GM12878 (cell line): ENCODE measurements at regions of chr14 and their contacts with region 1.

Region 1: GRCh38 chr14:35883677-35884293 is 57.6 kb downstream of the BRMS1L start:
- DNase-seq: no peak
- ATAC-seq: peak; percentile 76
- H3K4me3 ChIP-seq: no peak overlapping the region
- H3K27ac ChIP-seq: no peak overlapping the region
- H3K4me1 ChIP-seq: 0 out of 2 replicates have a peak, but pooled peaks cover 4% of the 10 kb centered on the region
- H3K27me3 ChIP-seq: no peaks in the 10 kb centered on the region
- CTCF ChIP-seq: peak; percentile 65 to 80 (median 72)
- EP300 ChIP-seq: no peak
- POLR2A ChIP-seq: no peak
- RAD21 ChIP-seq: peak; percentile 55; the same call in 1 of the 2 replicates

Region 2: GRCh38 chr14:35797796-35798195 is 86.0 kb before region 1 on chr14:
- CTCF ChIA-PET with region 1: no interaction called
- POLR2A ChIA-PET with region 1: no interaction called
- RAD21 ChIA-PET with region 1: no interaction called
- SMC1A ChIA-PET with region 1: no interaction called
- in situ Hi-C with region 1: no loop called
- intact Hi-C with region 1: no loop called
- DNase-seq: no peak
- ATAC-seq: no peak
- H3K4me3 ChIP-seq: no peak overlapping the region
- H3K27ac ChIP-seq: no peak overlapping the region
- H3K4me1 ChIP-seq: no peaks in the 10 kb centered on the region
- H3K27me3 ChIP-seq: no peaks in the 10 kb centered on the region
- CTCF ChIP-seq: no peak
- EP300 ChIP-seq: no peak
- POLR2A ChIP-seq: no peak
- RAD21 ChIP-seq: no peak

Region 3: GRCh38 chr14:35855876-35856481 is 27.8 kb before region 1 on chr14:
- CTCF ChIA-PET with region 1: interaction called, 11 read pairs
- POLR2A ChIA-PET with region 1: no interaction called
- RAD21 ChIA-PET with region 1: no interaction called
- SMC1A ChIA-PET with region 1: interaction called, 4 read pairs
- in situ Hi-C with region 1: no loop called
- intact Hi-C with region 1: no loop called
- DNase-seq: peak; percentile 85
- ATAC-seq: peak; percentile 97
- H3K4me3 ChIP-seq: no peak overlapping the region
- H3K27ac ChIP-seq: peak overlapping the region; percentile 27; the same call in 1 of the 2 replicates
- H3K4me1 ChIP-seq: peaks cover 28% of the 10 kb centered on the region
- H3K27me3 ChIP-seq: no peaks in the 10 kb centered on the region
- CTCF ChIP-seq: peak in 1 of 3 experiments; percentile 29; a peak in 2 of 6 replicates
- EP300 ChIP-seq: peak; percentile 85 to 100; a peak in 3 of 4 replicates
- POLR2A ChIP-seq: no peak
- RAD21 ChIP-seq: peak; percentile 38; the same call in 1 of the 2 replicates

Region 4: DNA sequence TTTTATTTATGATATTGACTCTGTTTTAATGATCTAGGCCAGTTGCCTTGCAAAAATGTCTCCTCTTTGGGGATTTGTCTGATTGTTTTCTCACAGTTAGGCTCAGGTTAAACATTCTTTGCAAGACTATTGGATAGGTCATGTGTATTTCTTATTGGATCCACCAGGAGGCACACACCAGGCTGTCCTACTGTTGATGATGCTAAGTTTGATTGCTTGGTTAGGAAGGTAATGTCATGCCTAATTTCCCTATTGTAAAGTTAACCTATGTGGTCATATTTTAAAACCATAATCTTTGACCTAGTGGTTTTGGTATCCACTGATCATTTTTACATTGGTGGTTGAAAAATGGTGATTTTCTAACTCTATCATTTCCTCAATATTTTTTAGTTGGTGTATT is 79.4 kb after region 1 on chr14:
- CTCF ChIA-PET with region 1: interaction called, 10 read pairs
- POLR2A ChIA-PET with region 1: no interaction called
- RAD21 ChIA-PET with region 1: no interaction called
- SMC1A ChIA-PET with region 1: interaction called, 3 read pairs
- in situ Hi-C with region 1: no loop called
- intact Hi-C with region 1: no loop called
- DNase-seq: no peak
- ATAC-seq: peak; percentile 78
- H3K4me3 ChIP-seq: no peak overlapping the region
- H3K27ac ChIP-seq: no peak overlapping the region
- H3K4me1 ChIP-seq: no peaks in the 10 kb centered on the region
- H3K27me3 ChIP-seq: no peaks in the 10 kb centered on the region
- CTCF ChIP-seq: peak; percentile 33 to 53 (median 33); a peak in 5 of 6 replicates
- EP300 ChIP-seq: no peak
- POLR2A ChIP-seq: no peak
- RAD21 ChIP-seq: peak; percentile 33; the same call in 1 of the 2 replicates

Region 5: DNA sequence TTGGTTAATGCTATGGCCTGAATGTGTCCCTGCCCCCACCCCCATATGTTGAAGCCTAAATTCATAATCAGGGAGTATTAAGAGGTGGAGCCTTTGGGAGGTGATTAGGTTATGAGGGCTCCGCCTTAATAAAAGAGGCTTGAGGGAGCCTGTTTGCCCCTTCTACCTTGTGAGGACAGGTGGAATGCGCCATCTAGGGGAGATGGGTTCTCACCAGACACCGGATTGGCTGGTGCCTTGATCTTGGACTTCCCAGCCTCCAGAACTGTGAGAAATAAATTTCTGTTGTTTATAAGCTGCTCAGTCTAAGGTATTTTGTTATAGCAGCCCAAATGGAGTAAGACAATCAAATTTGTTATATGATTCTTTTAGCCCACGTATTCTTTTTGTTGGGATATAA is 144.4 kb after region 1 on chr14:
- CTCF ChIA-PET with region 1: interaction called, 21 read pairs
- POLR2A ChIA-PET with region 1: no interaction called
- RAD21 ChIA-PET with region 1: no interaction called
- SMC1A ChIA-PET with region 1: interaction called, 8 read pairs
- in situ Hi-C with region 1: no loop called
- intact Hi-C with region 1: loop called (anchors 1 kb)
- DNase-seq: no peak
- ATAC-seq: peak; percentile 72
- H3K4me3 ChIP-seq: no peak overlapping the region
- H3K27ac ChIP-seq: no peak overlapping the region
- H3K4me1 ChIP-seq: no peaks in the 10 kb centered on the region
- H3K27me3 ChIP-seq: no peaks in the 10 kb centered on the region
- CTCF ChIP-seq: peak; percentile 24 to 41 (median 25); a peak in 3 of 6 replicates
- EP300 ChIP-seq: no peak
- POLR2A ChIP-seq: no peak
- RAD21 ChIP-seq: peak; percentile 61

Region 6: DNA sequence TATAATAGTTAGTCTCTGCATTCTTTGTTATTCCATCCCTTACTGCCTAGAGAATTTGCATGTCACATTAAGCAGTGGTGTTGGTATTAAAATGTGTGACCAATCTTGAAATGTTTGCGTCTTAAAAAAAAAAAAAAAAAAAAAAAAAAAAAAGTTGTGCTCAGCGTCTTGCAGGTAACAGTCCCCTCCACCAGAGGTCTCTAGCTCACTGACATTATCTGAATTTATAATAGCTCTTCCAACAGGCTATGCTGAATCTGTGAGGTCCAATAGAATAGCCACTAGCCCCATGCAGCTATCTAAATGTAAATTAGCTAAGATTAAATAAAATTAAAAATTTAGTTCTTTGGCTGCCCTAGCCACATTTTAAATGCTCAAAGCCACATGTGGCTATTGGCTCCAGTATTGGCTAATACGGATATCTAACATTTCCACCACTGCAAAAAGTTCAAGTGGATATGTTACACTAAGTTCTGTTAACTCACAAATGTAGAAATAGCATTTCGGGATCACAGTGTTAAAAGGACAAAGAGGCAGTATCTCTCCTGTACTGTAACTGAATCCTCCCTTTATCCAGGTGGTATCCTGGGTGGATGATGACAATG is 670.0 kb after region 1 on chr14:
- CTCF ChIA-PET with region 1: interaction called, 5 read pairs
- POLR2A ChIA-PET with region 1: no interaction called
- RAD21 ChIA-PET with region 1: no interaction called
- SMC1A ChIA-PET with region 1: interaction called, 4 read pairs
- in situ Hi-C with region 1: loop called (anchors 10 kb)
- intact Hi-C with region 1: no loop called
- DNase-seq: no peak
- ATAC-seq: peak; percentile 73
- H3K4me3 ChIP-seq: no peak overlapping the region
- H3K27ac ChIP-seq: no peak overlapping the region
- H3K4me1 ChIP-seq: no peaks in the 10 kb centered on the region
- H3K27me3 ChIP-seq: no peaks in the 10 kb centered on the region
- CTCF ChIP-seq: peak; percentile 48 to 71 (median 62); a peak in 5 of 6 replicates
- EP300 ChIP-seq: no peak
- POLR2A ChIP-seq: no peak
- RAD21 ChIP-seq: peak; percentile 61